HepG2 (cell line): ENCODE measurements at regions of chr2 and their contacts with region 1.

Region 1: DNA sequence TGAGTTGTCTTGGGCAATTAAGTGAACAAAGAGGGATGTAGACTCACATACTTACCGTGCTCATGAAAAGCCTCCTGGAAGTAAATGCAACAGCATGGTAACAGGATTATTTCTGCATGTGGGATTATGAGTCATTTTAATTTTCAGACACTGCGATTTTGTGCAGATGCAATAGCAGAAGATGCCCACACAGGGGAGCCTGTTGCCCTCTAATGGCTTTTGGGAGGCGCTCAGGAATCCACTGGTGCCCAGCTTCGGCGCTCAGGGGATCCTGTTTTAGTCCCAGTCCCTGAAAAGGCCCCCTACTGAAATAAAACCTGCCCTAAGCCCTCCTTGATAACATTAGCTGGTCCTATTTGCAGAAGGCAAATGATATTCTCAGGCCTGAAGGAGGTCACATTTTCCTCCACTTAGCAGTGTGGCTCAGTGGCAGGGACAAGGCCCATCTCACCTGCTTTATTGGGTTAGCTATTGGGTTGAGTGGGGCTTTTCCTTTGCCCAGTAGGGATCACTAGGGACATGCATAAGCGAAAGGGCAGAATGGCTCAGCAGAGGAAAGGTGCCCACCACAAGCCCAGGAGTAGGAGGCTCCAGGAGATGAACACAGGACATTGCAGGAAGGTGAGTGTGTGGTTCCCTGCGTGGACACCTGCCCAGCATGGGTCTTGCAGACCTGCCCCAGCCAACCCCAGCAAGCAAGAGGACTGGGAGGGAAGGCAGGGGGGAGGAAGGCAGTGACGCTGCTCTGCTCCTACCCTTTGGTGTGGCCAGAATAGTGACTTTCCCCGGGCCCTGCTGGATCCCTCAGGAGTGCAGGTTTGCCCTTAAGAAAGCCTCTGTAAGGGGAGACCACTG is 26.5 kb upstream of the KCNS3 start:
- DNase-seq: peak; percentile 45
- ATAC-seq: peak; percentile 90
- H3K4me3 ChIP-seq: no peak overlapping the region
- H3K27ac ChIP-seq: no peak overlapping the region
- H3K4me1 ChIP-seq: no peaks in the 10 kb centered on the region
- H3K27me3 ChIP-seq: peaks cover 0 to 4% of the 10 kb centered on the region in 2 experiments; a peak in 2 of 5 replicates
- CTCF ChIP-seq: peak; percentile 86
- EP300 ChIP-seq: no peak
- POLR2A ChIP-seq: no peak
- RAD21 ChIP-seq: peak; percentile 86

Region 2: DNA sequence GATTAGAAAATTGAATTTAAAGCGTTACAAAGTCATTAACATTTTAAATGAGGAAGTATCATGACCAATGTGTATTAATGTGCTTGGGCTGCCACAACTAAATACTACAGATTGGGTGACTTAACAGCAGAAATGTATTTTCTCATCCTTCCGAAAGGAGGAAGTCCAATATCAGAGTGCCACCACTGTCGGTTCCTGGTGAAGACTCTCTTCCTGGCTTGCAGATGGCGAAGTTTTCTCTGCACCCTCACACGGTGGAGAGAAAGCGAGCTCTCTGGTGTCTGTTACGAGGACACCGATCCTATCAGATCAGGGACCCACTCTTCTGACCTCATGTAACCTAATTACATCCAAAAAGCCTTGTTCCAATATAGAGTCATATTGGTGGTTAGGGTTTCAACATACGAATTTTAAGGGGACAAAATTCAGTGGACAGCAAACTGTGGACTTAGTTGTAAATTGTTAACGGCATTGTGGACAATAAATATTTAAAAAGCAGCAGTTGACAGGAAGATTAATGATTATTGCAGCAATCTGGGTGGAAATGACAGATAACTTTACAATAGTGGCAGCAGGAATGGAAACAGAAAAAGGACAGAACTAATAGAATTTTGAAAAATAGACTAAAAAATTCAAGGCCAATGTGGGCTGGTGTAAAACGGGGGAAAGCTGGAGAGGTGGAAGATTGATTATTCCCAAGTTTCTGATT is 1151.3 kb before region 1 on chr2:
- CTCF ChIA-PET with region 1: no interaction called
- POLR2A ChIA-PET with region 1: no interaction called
- in situ Hi-C with region 1: no loop called
- intact Hi-C with region 1: no loop called
- DNase-seq: no peak
- ATAC-seq: no peak
- H3K4me3 ChIP-seq: no peak overlapping the region
- H3K27ac ChIP-seq: no peak overlapping the region
- H3K4me1 ChIP-seq: no peaks in the 10 kb centered on the region
- H3K27me3 ChIP-seq: no peaks in the 10 kb centered on the region
- CTCF ChIP-seq: no peak
- EP300 ChIP-seq: no peak
- POLR2A ChIP-seq: no peak
- RAD21 ChIP-seq: no peak

Region 3: GRCh38 chr2:17918789-17919188 is 66.8 kb after region 1 on chr2:
- CTCF ChIA-PET with region 1: no interaction called
- POLR2A ChIA-PET with region 1: no interaction called
- in situ Hi-C with region 1: no loop called
- intact Hi-C with region 1: loop called (anchors 2 kb)
- DNase-seq: no peak
- ATAC-seq: peak; percentile 77
- H3K4me3 ChIP-seq: no peak overlapping the region
- H3K27ac ChIP-seq: no peak overlapping the region
- H3K4me1 ChIP-seq: no peaks in the 10 kb centered on the region
- H3K27me3 ChIP-seq: no peaks in the 10 kb centered on the region
- CTCF ChIP-seq: peak; percentile 43
- EP300 ChIP-seq: no peak
- POLR2A ChIP-seq: no peak
- RAD21 ChIP-seq: no peak

Region 4: DNA sequence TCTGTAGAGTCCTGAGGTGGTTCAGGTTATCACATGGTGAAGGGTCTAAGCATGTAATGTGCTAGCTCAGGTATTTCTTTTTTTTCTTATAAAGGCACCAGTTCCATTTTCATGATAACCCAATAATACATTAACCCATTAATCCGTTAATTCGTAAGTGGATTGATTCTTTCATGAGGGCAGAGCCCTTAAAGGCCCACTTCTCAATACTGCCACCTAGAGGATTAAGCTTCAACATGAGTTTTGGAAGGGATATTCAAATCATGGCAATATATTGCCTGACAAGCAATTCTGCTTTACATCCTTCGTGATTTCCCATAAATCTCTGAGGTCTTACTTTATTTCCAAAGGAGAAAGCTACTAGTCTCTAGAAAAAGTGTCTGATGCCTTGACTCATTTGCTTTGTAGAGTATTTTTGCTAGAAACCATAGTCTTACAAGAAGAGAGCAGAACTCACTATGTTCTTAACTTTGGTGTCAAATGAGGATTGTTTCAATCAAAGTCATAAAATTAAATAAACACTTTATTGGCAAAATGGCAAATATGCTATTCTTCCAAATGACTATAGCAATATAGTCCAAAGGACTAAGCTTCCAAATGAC is 297.8 kb after region 1 on chr2:
- CTCF ChIA-PET with region 1: interaction called, 16 read pairs
- POLR2A ChIA-PET with region 1: no interaction called
- in situ Hi-C with region 1: loop called (anchors 5 kb)
- intact Hi-C with region 1: loop called (anchors 1 kb)
- DNase-seq: peak; percentile 31
- ATAC-seq: peak; percentile 71
- H3K4me3 ChIP-seq: no peak overlapping the region
- H3K27ac ChIP-seq: no peak overlapping the region
- H3K4me1 ChIP-seq: no peaks in the 10 kb centered on the region
- H3K27me3 ChIP-seq: no peaks in the 10 kb centered on the region
- CTCF ChIP-seq: peak; percentile 73
- EP300 ChIP-seq: no peak
- POLR2A ChIP-seq: no peak
- RAD21 ChIP-seq: no peak